Activated CD8-positive, alpha-beta T cell treated with anti-CD3 and anti-CD28 coated beads, Interleukin-2, amount 10 ng/mL, durations not matched to agents 7 days and 5 days (primary cell): ENCODE measurements at regions of chr17 and their contacts with region 1.

Region 1: GRCh38 chr17:16380640-16381495 is at the start of gene UBB:
- DNase-seq: peak; percentile 97
- ATAC-seq: peak; percentile 92
- H3K4me3 Mint-ChIP-seq: peak within 1 kb of the TSS; percentile 97
- H3K27ac Mint-ChIP-seq: peak within 1 kb of the TSS; percentile 96
- H3K4me1 Mint-ChIP-seq: peaks cover 38% of the 10 kb centered on the region
- H3K27me3 Mint-ChIP-seq: no peaks in the 10 kb centered on the region
- total RNA-seq, gene UBB: 1,415 to 1,441 TPM

Region 2: GRCh38 chr17:16215273-16215964 is 165.4 kb before region 1 on chr17 and contains the start of gene NCOR1:
- CTCF ChIA-PET with region 1: no interaction called
- POLR2A ChIA-PET with region 1: interaction called, 10 read pairs
- DNase-seq: peak; percentile 93
- ATAC-seq: peak; percentile 88
- H3K4me3 Mint-ChIP-seq: peak within 1 kb of the TSS; percentile 84
- H3K27ac Mint-ChIP-seq: peak within 1 kb of the TSS; percentile 85
- H3K4me1 Mint-ChIP-seq: peaks cover 48% of the 10 kb centered on the region
- H3K27me3 Mint-ChIP-seq: no peaks in the 10 kb centered on the region
- total RNA-seq, gene NCOR1: 160 to 161 TPM

Region 3: GRCh38 chr17:16353317-16354174 is 27.3 kb before region 1 on chr17 and contains the start of gene CENPV:
- CTCF ChIA-PET with region 1: interaction called, 5 read pairs
- POLR2A ChIA-PET with region 1: interaction called, 19 read pairs
- DNase-seq: peak; percentile 67
- ATAC-seq: peak; percentile 87
- H3K4me3 Mint-ChIP-seq: peak within 1 kb of the TSS; percentile 83
- H3K27ac Mint-ChIP-seq: peak within 1 kb of the TSS; percentile 79
- H3K4me1 Mint-ChIP-seq: peaks cover 25% of the 10 kb centered on the region
- H3K27me3 Mint-ChIP-seq: peaks cover 9% of the 10 kb centered on the region
- total RNA-seq, gene CENPV: 28.6 to 36.4 TPM

Region 4: GRCh38 chr17:16438557-16439302 is 57.9 kb after region 1 on chr17:
- CTCF ChIA-PET with region 1: interaction called, 7 read pairs
- POLR2A ChIA-PET with region 1: interaction called, 35 read pairs
- DNase-seq: peak; percentile 97
- ATAC-seq: peak; percentile 90
- H3K4me3 Mint-ChIP-seq: peak overlapping the region; percentile 100
- H3K27ac Mint-ChIP-seq: peak overlapping the region; percentile 99
- H3K4me1 Mint-ChIP-seq: peaks cover 49% of the 10 kb centered on the region
- H3K27me3 Mint-ChIP-seq: no peaks in the 10 kb centered on the region

Region 5: DNA sequence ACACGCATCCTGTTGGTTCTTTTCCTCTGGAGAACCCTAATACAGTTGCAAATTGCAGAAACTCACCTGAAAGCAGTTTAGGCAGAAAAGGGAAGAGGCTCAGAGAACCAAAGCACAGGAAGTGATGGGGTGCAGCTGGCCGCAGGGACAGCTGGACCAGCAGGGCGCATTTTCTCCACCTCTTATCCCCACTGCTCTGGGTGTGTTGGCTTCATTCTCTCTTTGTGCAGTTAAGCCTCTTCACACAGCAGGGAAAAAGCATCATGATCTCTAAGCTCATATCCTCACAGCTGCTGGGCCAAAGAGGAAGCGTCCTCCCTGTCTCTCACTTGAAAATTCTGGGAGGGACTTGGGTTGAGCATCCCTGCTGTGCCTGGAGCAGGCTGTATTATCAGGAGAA is 131.1 kb after region 1 on chr17:
- CTCF ChIA-PET with region 1: no interaction called
- POLR2A ChIA-PET with region 1: no interaction called
- DNase-seq: peak; percentile 29
- ATAC-seq: no peak
- H3K4me3 Mint-ChIP-seq: no peak overlapping the region
- H3K27ac Mint-ChIP-seq: no peak overlapping the region
- H3K4me1 Mint-ChIP-seq: peaks cover 12% of the 10 kb centered on the region
- H3K27me3 Mint-ChIP-seq: peaks cover 22% of the 10 kb centered on the region